ENCODE measurements at regions of chr14 and their contacts with region 1.

Region 1: GRCh38 chr14:72665259-72665658 is 228.6 kb downstream of the DPF3 start:
- DNase-seq: no peak
- H3K4me3 ChIP-seq: no peak overlapping the region
- H3K27ac ChIP-seq: no peak overlapping the region
- H3K4me1 ChIP-seq: no peaks in the 10 kb centered on the region
- CTCF ChIP-seq: no peak

Region 2: DNA sequence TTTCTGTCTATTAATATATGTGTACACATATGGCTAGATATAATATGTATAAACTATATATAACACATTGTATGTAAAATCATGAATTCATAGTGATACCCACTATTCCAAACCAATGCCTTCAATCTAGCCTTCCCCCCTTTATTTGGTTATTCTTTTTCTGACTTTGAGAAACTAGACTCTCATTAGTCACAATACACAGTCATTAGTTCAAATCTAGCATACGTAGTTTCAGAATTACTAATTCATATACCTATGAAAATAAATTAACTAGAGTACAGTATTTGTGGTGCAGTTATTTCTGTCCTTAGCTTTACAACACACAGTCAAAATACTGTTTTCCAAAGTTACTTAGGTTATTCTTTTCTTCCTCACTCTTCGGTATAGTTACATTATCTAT is 39.6 kb before region 1 on chr14:
- CTCF ChIA-PET with region 1: no interaction called
- POLR2A ChIA-PET with region 1: no interaction called
- intact Hi-C with region 1: loop called (anchors 1 kb)
- DNase-seq: no peak
- H3K4me3 ChIP-seq: no peak overlapping the region
- H3K27ac ChIP-seq: no peak overlapping the region
- H3K4me1 ChIP-seq: no peaks in the 10 kb centered on the region
- CTCF ChIP-seq: no peak

Region 3: GRCh38 chr14:72699852-72700257 is 34.6 kb after region 1 on chr14:
- CTCF ChIA-PET with region 1: no interaction called
- POLR2A ChIA-PET with region 1: interaction called, 10 read pairs
- intact Hi-C with region 1: no loop called
- DNase-seq: no peak
- H3K4me3 ChIP-seq: no peak overlapping the region
- H3K27ac ChIP-seq: no peak overlapping the region
- H3K4me1 ChIP-seq: no peaks in the 10 kb centered on the region
- CTCF ChIP-seq: no peak

Measured in OCI-LY7 (cell line).